Adrenal gland (tissue), 19 donors: ENCODE measurements at regions of chr16 and their contacts with region 1.

Region 1: GRCh38 chr16:50644729-50645128 is 36.4 kb downstream of the SNX20 start:
- DNase-seq: peak; percentile 34 to 70 (median 48)
- H3K4me3 ChIP-seq: no peak overlapping the region
- H3K27ac ChIP-seq: no peak overlapping the region
- H3K4me1 ChIP-seq: peaks cover 0 to 9% of the 10 kb centered on the region in 2 donors
- H3K27me3 ChIP-seq: no peaks in the 10 kb centered on the region
- CTCF ChIP-seq: peak; percentile 20 to 61 (median 50)
- POLR2A ChIP-seq: no peak

Region 2: DNA sequence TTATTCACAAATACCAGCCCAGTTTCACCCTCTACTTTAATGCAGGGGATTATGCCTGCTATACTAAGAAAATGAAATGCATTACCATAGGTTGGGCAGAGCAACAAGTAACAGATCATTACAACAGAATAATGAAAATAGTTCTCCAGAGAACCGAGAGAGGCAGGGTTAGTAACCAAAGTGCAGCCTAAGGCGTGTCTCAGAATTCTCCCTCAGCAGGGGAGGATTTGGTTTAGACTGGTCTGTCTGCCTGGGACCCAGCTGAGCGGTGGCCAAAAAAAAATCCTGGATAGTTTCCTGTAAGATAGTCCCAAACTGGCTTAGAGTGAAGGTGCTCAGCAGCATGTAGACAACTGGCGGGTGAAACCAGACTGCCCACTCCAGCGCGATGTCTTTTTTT is 409.1 kb before region 1 on chr16:
- intact Hi-C with region 1: loop called in 1 of 2 experiments (anchors 10 kb)
- DNase-seq: no peak
- H3K4me3 ChIP-seq: no peak overlapping the region
- H3K27ac ChIP-seq: no peak overlapping the region
- H3K4me1 ChIP-seq: no peaks in the 10 kb centered on the region
- H3K27me3 ChIP-seq: no peaks in the 10 kb centered on the region
- CTCF ChIP-seq: no peak
- POLR2A ChIP-seq: no peak

Region 3: GRCh38 chr16:50548125-50548908 is 96.4 kb before region 1 on chr16 and contains the start of gene NKD1:
- intact Hi-C with region 1: loop called in 1 of 2 experiments (anchors 10 kb)
- DNase-seq: peak; percentile 56 to 83 (median 72)
- H3K4me3 ChIP-seq: peak within 1 kb of the TSS in 3 of 4 donors; percentile 48 to 95 (median 70)
- H3K27ac ChIP-seq: peak within 1 kb of the TSS in 1 of 5 donors; percentile 63
- H3K4me1 ChIP-seq: peaks cover 4 to 7% of the 10 kb centered on the region in 2 donors
- H3K27me3 ChIP-seq: no peaks in the 10 kb centered on the region
- CTCF ChIP-seq: no peak
- POLR2A ChIP-seq: peak; percentile 41 to 58
- total RNA-seq, gene NKD1: 0.67 to 8.9 (median 7.0) TPM

Region 4: GRCh38 chr16:50696575-50697420 is 52.1 kb after region 1 on chr16:
- intact Hi-C with region 1: no loop called
- DNase-seq: peak; percentile 55 to 89 (median 82)
- H3K4me3 ChIP-seq: no peak overlapping the region
- H3K27ac ChIP-seq: peak overlapping the region in 2 of 5 donors; percentile 15 to 59
- H3K4me1 ChIP-seq: peaks cover 12 to 32% of the 10 kb centered on the region in 2 donors
- H3K27me3 ChIP-seq: no peaks in the 10 kb centered on the region
- CTCF ChIP-seq: no peak
- POLR2A ChIP-seq: no peak

Region 5: DNA sequence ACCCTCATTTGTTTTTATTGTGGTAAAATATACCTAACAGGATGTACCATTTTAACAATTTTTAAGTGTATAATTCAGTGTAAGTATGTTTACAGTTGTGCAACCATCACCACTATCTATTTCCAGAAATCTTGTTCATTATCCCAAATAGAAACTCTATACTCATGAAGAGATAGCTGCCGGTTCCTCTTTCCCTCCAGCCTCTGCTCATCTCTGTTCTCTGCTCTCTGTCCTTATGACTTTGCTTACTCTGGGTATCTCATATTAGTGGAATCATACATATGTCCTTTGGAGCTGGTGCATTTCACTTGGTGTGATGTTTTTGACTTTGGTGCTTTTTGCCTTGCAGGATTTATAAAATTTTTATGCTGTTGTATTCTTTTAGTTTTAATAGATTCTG is 116.5 kb after region 1 on chr16:
- intact Hi-C with region 1: no loop called
- DNase-seq: no peak
- H3K4me3 ChIP-seq: no peak overlapping the region
- H3K27ac ChIP-seq: no peak overlapping the region
- H3K4me1 ChIP-seq: peaks cover 0 to 34% of the 10 kb centered on the region in 2 donors
- H3K27me3 ChIP-seq: no peaks in the 10 kb centered on the region
- CTCF ChIP-seq: no peak
- POLR2A ChIP-seq: no peak

Region 6: DNA sequence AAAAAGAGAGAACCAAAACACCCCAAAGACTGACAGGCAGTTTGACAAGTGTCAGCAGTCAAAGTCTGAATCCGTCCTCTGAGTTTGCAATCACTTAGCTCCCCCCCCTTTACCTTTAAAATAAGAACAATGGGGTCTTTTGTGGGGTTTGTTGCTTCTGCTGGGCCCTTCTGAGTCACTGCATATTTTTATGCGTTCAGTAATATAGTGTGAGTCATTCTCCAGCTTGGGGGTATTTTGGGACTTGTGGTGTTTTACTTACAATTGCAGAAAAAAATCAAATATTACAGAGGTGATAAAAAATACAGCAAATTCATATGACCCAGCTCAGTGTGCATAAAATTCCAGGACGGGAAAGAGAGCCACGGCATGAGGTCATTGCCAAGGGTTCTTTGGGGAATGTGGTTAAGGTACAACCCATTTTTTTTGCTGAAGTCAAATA is 217.3 kb after region 1 on chr16:
- intact Hi-C with region 1: no loop called
- DNase-seq: no peak
- H3K4me3 ChIP-seq: no peak overlapping the region
- H3K27ac ChIP-seq: no peak overlapping the region
- H3K4me1 ChIP-seq: no peaks in the 10 kb centered on the region
- H3K27me3 ChIP-seq: no peaks in the 10 kb centered on the region
- CTCF ChIP-seq: no peak
- POLR2A ChIP-seq: no peak